Gastrocnemius medialis (tissue), 4 donors: ENCODE measurements at regions of chrX and their contacts with region 1.

Region 1: DNA sequence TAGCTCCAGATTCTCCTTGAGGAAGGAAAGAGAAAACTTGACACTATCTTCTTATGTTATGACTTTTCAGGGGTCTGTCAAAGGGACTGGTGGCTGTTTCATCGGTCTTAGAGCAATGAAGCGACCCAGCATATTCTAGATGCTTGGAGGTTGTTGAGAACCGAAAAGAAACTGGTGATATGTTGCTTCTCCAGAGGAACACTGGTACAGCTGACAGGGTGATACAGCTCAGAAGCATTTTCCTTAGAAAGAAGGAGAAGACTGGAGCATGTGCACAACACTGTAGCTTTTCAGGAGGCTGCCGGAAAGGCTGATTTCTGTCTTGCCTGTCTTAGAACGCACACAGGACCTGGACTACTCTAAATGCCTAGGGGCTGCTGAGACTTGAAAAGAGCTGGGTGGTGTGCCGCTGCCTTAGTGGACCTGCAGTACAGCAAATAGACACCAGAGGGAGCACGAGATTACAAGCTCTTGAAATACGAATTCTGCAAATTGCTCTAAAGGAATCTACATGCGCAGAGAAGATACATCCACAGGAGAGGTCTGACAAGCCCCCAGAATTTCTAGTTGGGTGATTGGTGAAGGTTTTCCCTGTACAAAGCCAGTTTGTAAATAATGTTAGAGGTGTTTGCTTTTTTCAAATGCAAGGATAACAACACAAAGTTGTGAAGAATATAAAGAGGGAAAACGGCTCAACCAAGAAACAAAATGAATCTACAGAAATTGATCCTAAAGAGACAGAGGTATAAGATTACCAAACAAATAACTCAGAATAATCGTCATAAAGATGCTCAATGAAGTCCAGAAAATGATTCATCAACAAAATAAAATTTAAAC is 223.1 kb upstream of the DMD start:
- DNase-seq: peak in 1 of 2 donors; percentile 30
- ATAC-seq: peak in 1 of 2 donors; percentile 62
- H3K4me3 ChIP-seq: peak overlapping the region in 1 of 4 donors; percentile 28
- H3K27ac ChIP-seq: no peak overlapping the region
- H3K4me1 ChIP-seq: no peaks in the 10 kb centered on the region
- H3K27me3 ChIP-seq: no peaks in the 10 kb centered on the region
- CTCF ChIP-seq: peak; percentile 33 to 91 (median 73)
- POLR2A ChIP-seq: no peak

Region 2: DNA sequence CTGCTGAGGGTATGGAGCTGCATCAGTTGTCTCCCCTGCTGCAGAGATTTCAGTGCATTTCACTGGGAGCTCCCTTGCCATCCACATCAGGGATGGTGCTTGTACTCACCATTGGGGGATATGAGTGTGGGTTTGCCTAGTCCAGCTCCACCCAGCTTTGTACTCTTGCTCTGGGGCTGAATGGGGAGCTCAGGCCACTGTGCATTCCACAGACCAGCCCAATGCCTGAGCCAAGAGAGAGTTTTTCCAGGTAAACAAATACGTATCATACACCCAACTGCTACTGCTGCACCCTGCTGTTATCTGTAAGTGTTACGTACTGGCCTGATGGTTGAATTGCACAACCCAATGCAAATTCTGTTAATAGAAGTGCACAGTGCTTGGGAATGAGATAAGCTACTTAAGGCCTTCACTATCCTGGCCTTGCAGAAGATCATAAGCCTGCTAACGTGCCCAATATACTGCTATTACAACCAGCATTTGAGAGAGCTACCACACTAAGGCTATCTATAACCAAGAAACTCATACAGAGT is 18.1 kb before region 1 on chrX:
- in situ Hi-C with region 1: no loop called
- intact Hi-C with region 1: no loop called
- DNase-seq: no peak
- ATAC-seq: no peak
- H3K4me3 ChIP-seq: no peak overlapping the region
- H3K27ac ChIP-seq: no peak overlapping the region
- H3K4me1 ChIP-seq: no peaks in the 10 kb centered on the region
- H3K27me3 ChIP-seq: no peaks in the 10 kb centered on the region
- CTCF ChIP-seq: no peak
- POLR2A ChIP-seq: no peak

Region 3: GRCh38 chrX:33465137-33465536 is 30.7 kb after region 1 on chrX:
- in situ Hi-C with region 1: no loop called
- intact Hi-C with region 1: no loop called
- DNase-seq: no peak
- ATAC-seq: no peak
- H3K4me3 ChIP-seq: no peak overlapping the region
- H3K27ac ChIP-seq: no peak overlapping the region
- H3K4me1 ChIP-seq: no peaks in the 10 kb centered on the region
- H3K27me3 ChIP-seq: no peaks in the 10 kb centered on the region
- CTCF ChIP-seq: no peak
- POLR2A ChIP-seq: no peak

Region 4: GRCh38 chrX:34275699-34276098 is 841.2 kb after region 1 on chrX:
- in situ Hi-C with region 1: loop called in 1 of 4 experiments (anchors 25 kb)
- intact Hi-C with region 1: no loop called
- DNase-seq: no peak
- ATAC-seq: no peak
- H3K4me3 ChIP-seq: no peak overlapping the region
- H3K27ac ChIP-seq: no peak overlapping the region
- H3K4me1 ChIP-seq: no peaks in the 10 kb centered on the region
- H3K27me3 ChIP-seq: no peaks in the 10 kb centered on the region
- CTCF ChIP-seq: no peak
- POLR2A ChIP-seq: no peak

Region 5: GRCh38 chrX:34300871-34301270 is 866.4 kb after region 1 on chrX:
- in situ Hi-C with region 1: loop called (anchors 10 to 25 kb)
- intact Hi-C with region 1: no loop called
- DNase-seq: no peak
- ATAC-seq: no peak
- H3K4me3 ChIP-seq: no peak overlapping the region
- H3K27ac ChIP-seq: no peak overlapping the region
- H3K4me1 ChIP-seq: no peaks in the 10 kb centered on the region
- H3K27me3 ChIP-seq: no peaks in the 10 kb centered on the region
- CTCF ChIP-seq: peak in 4 of 5 experiments; percentile 21 to 56 (median 28)
- POLR2A ChIP-seq: no peak